ENCODE measurements at regions of chr19 and their contacts with region 1.

Region 1: DNA sequence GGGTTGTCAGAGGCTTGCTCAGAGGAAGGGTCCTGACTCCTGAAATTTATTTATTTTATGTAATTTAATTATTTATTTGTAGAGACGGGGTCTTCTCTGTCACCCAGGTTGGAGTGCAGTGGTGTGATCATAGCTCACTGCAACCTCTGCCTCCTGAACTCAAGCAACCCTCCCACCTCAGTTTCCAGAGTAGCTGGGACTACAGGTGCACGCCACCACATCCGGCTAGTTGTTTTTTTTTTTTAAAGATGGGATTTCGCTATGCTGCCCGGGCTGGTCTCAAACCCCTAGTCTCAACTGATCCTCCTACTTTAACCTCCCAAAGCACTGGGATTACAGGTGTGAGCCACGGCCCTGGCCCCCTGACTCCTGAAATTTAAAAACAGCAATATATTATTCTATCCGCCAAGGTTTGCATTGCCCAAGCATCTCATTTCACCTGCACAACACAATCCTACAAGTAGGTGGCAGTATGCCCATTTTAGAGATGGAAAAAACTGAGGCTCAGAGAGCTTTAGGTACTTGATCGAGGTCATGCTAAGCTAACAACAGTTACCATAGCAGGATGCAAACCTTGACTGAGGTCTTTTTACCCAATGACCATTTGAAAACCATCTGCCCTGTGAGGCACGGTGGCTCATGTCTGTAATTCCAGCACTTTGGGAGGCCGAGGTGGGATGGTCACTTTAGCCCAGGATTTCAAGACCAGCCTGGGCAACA is 18.1 kb downstream of the ARHGEF18 start:
- DNase-seq: peak; percentile 57
- ATAC-seq: peak; percentile 90
- H3K4me3 Mint-ChIP-seq: no peak overlapping the region
- H3K27ac Mint-ChIP-seq: peak overlapping the region; percentile 73
- H3K4me1 Mint-ChIP-seq: peaks cover 22% of the 10 kb centered on the region
- H3K27me3 Mint-ChIP-seq: no peaks in the 10 kb centered on the region
- CTCF ChIP-seq: peak; percentile 79

Region 2: GRCh38 chr19:7395360-7396066 is 28.7 kb after region 1 on chr19:
- CTCF ChIA-PET with region 1: interaction called, 12 read pairs
- POLR2A ChIA-PET with region 1: no interaction called
- intact Hi-C with region 1: no loop called
- DNase-seq: peak; percentile 19
- ATAC-seq: peak; percentile 34
- H3K4me3 Mint-ChIP-seq: peak overlapping the region; percentile 84
- H3K27ac Mint-ChIP-seq: peak overlapping the region; percentile 74
- H3K4me1 Mint-ChIP-seq: peaks cover 39% of the 10 kb centered on the region
- H3K27me3 Mint-ChIP-seq: no peaks in the 10 kb centered on the region
- CTCF ChIP-seq: no peak

Region 3: DNA sequence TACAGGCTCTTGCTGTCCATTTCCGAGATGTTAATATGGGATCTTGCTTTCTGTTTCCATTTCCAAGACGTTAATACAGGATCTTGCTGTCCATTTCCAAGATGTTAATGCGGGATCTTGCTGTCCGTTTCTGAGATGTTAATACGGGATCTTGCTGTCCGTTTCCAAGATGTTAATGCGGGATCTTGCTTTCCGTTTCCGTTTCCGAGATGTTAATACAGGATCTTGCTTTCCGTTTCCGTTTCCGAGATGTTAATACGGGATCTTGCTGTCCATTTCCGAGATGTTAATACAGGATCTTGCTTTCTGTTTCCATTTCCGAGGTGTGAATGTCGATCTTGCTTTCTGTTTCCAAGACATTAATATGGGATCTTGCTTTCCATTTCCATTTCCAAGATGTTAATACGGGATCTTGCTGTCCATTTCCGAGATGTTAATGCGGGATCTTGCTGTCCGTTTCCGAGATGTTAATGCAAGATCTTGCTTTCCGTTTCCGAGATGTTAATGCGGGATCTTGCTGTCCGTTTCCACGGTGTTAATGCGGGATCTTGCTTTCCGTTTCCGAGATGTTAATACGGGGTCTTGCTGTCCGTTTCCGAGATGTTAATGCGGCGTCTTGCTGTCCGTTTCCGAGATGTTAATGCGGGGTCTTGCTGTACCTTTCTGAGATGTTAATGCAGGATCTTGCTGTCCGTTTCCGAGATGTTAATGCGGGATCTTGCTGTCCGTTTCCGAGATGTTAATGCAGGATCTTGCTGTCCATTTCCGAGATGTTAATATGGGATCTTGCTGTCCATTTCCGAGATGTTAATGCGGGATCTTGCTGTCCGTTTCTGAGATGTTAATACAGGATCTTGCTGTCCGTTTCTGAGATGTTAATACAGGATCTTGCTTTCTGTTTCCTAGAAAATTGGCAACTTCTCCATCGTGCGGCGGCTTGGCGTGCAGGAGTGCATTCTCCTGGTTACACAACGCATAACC is 83.7 kb after region 1 on chr19:
- CTCF ChIA-PET with region 1: no interaction called
- POLR2A ChIA-PET with region 1: no interaction called
- intact Hi-C with region 1: no loop called
- DNase-seq: no peak
- ATAC-seq: no peak
- H3K4me3 Mint-ChIP-seq: no peak overlapping the region
- H3K27ac Mint-ChIP-seq: no peak overlapping the region
- H3K4me1 Mint-ChIP-seq: peaks cover 12% of the 10 kb centered on the region
- H3K27me3 Mint-ChIP-seq: no peaks in the 10 kb centered on the region
- CTCF ChIP-seq: no peak

Measured in activated CD8-positive, alpha-beta T cell treated with anti-CD3 and anti-CD28 coated beads for 36 hours (primary cell).